ENCODE measurements at regions of chr12 and their contacts with region 1.

Region 1: GRCh38 chr12:10331642-10332239 is 24.1 kb downstream of the KLRD1 start:
- DNase-seq: peak; percentile 28
- H3K4me3 Mint-ChIP-seq: no peak overlapping the region
- H3K27ac Mint-ChIP-seq: no peak overlapping the region
- H3K4me1 Mint-ChIP-seq: peaks cover 17% of the 10 kb centered on the region
- H3K27me3 Mint-ChIP-seq: no peaks in the 10 kb centered on the region
- CTCF ChIP-seq: peak; percentile 53

Region 2: GRCh38 chr12:10501031-10501430 is 169.3 kb after region 1 on chr12:
- CTCF ChIA-PET with region 1: no interaction called
- intact Hi-C with region 1: loop called (anchors 1 kb)
- DNase-seq: no peak
- H3K4me3 Mint-ChIP-seq: no peak overlapping the region
- H3K27ac Mint-ChIP-seq: no peak overlapping the region
- H3K4me1 Mint-ChIP-seq: no peaks in the 10 kb centered on the region
- H3K27me3 Mint-ChIP-seq: no peaks in the 10 kb centered on the region
- CTCF ChIP-seq: no peak

Region 3: DNA sequence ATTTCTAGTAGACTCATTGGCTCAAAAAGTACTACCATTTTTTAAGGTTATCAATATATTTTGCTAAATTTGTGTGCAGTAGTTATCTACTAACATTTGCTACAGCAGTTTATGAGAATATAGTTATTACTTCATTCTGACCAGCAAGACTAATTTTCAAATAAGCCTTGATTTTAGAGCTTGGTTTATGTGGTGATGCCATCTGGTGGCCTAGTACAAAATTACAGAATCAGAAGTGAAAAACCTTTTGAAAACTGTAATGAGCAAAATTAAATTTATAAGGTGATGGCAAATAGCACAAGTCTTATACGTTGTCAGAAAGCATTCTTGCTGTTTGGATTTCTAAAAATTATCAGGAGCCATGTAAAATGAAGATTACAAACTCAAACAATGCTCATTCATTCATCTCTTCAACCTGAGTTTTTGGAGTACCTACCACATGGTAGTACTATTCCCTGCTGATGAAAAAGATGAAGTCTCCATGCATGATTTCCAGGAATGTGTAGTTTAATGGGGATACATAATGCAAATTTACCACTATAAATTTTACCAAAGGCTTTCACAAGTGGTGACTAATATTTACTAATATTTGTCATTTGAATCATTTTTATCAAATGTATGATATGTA is 230.7 kb after region 1 on chr12:
- CTCF ChIA-PET with region 1: interaction called, 3 read pairs
- intact Hi-C with region 1: loop called (anchors 1 kb)
- DNase-seq: peak; percentile 45
- H3K4me3 Mint-ChIP-seq: no peak overlapping the region
- H3K27ac Mint-ChIP-seq: no peak overlapping the region
- H3K4me1 Mint-ChIP-seq: no peaks in the 10 kb centered on the region
- H3K27me3 Mint-ChIP-seq: no peaks in the 10 kb centered on the region
- CTCF ChIP-seq: peak; percentile 63

Measured in Calu3 (cell line).